ENCODE measurements at regions of chr3 and their contacts with region 1.

Region 1: GRCh38 chr3:156509189-156510174 is 45.4 kb downstream of the SSR3 start:
- DNase-seq: no peak
- ATAC-seq: peak; percentile 83
- H3K4me3 ChIP-seq: no peak overlapping the region
- H3K27ac ChIP-seq: peak overlapping the region in 1 of 2 donors; percentile 20
- H3K4me1 ChIP-seq: no peaks in the 10 kb centered on the region
- H3K27me3 ChIP-seq: no peaks in the 10 kb centered on the region

Region 2: DNA sequence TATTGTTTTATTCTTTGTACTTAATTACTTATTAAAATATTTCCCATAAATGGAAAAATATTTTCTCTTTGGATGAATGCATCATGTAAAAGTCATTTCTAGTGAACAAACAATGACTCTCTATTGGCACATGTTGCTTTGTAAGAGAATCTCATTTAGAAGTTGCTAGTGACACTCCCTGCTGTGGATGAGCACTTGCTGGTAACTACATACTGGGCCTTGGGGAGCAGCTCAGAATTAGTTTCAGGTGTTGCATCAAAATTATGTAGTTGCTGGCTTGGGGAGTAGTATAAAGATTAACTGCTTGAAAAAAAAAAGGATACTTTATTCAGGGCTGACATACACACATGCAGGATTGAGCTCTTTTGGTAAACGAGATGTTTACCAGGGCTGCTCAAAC is 469.4 kb before region 1 on chr3:
- intact Hi-C with region 1: loop called (anchors 2 to 10 kb)
- DNase-seq: no peak
- ATAC-seq: no peak
- H3K4me3 ChIP-seq: no peak overlapping the region
- H3K27ac ChIP-seq: no peak overlapping the region
- H3K4me1 ChIP-seq: peaks cover 0 to 1% of the 10 kb centered on the region in 2 donors
- H3K27me3 ChIP-seq: no peaks in the 10 kb centered on the region

Region 3: GRCh38 chr3:156151824-156152428 is 357.6 kb before region 1 on chr3:
- intact Hi-C with region 1: loop called (anchors 1 kb)
- DNase-seq: peak; percentile 81 to 90
- ATAC-seq: peak; percentile 60
- H3K4me3 ChIP-seq: no peak overlapping the region
- H3K27ac ChIP-seq: peak overlapping the region in 1 of 2 donors; percentile 61
- H3K4me1 ChIP-seq: peaks cover 4 to 16% of the 10 kb centered on the region in 2 donors
- H3K27me3 ChIP-seq: no peaks in the 10 kb centered on the region

Region 4: GRCh38 chr3:156174229-156174847 is 335.1 kb before region 1 on chr3:
- intact Hi-C with region 1: loop called in 1 of 2 experiments (anchors 5 kb)
- DNase-seq: no peak
- ATAC-seq: no peak
- H3K4me3 ChIP-seq: no peak overlapping the region
- H3K27ac ChIP-seq: no peak overlapping the region
- H3K4me1 ChIP-seq: no peaks in the 10 kb centered on the region
- H3K27me3 ChIP-seq: no peaks in the 10 kb centered on the region

Region 5: GRCh38 chr3:156449712-156450574 is 59.5 kb before region 1 on chr3:
- intact Hi-C with region 1: loop called in 1 of 2 experiments (anchors 10 kb)
- DNase-seq: no peak
- ATAC-seq: no peak
- H3K4me3 ChIP-seq: no peak overlapping the region
- H3K27ac ChIP-seq: no peak overlapping the region
- H3K4me1 ChIP-seq: no peaks in the 10 kb centered on the region
- H3K27me3 ChIP-seq: no peaks in the 10 kb centered on the region